PC-9 (cell line): ENCODE measurements at regions of chr3 and their contacts with region 1.

Region 1: DNA sequence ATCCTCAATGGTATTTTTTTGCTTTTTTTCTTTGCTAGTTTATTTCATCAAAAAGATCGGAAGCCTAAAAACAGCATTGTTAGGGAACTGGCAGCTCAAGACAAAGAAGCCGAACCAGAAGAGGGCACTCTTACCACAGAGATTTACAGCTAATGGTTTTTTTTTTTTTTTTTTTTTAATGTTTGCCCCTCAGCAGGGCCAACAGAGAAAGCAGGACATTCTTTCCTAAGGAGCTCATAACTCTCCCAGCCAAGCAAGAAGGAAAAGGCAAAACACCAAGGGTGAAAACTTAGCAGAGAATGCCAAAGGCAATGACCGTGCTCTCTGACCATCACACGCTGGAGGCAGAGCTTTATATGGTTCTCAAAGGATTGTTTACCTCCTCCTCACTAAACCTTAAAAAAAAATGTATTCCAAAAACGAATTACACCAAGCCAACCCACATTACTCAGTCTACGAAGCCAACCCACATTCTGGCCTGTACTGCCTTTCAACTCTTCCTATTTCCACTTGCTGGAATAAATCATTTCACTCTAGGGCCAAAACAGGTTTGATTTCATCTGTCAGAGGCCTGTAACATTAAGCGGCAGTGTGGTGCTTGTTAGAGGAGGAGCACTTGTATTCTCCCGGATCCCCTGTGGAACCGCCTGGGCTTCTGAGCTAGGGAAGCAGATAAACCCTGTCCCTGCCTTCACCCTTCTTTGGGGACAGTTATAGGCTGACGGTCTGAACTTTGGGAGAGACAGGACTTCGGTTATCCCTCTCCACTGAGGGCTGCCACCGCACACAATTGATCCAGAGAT is 35.6 kb upstream of the GYG1 start:
- DNase-seq: peak; percentile 50 to 80
- H3K4me3 ChIP-seq: no peak overlapping the region
- H3K27ac ChIP-seq: peak overlapping the region; percentile 28; the same call in 1 of the 2 replicates
- H3K4me1 ChIP-seq: peaks cover 7% of the 10 kb centered on the region; the same call in 1 of the 2 replicates
- H3K27me3 ChIP-seq: no peaks in the 10 kb centered on the region
- CTCF ChIP-seq: peak; percentile 72

Region 2: GRCh38 chr3:148896062-148896461 is 59.7 kb before region 1 on chr3:
- CTCF ChIA-PET with region 1: no interaction called
- POLR2A ChIA-PET with region 1: no interaction called
- intact Hi-C with region 1: no loop called
- DNase-seq: no peak
- H3K4me3 ChIP-seq: no peak overlapping the region
- H3K27ac ChIP-seq: no peak overlapping the region
- H3K4me1 ChIP-seq: no peaks in the 10 kb centered on the region
- H3K27me3 ChIP-seq: no peaks in the 10 kb centered on the region
- CTCF ChIP-seq: no peak

Region 3: DNA sequence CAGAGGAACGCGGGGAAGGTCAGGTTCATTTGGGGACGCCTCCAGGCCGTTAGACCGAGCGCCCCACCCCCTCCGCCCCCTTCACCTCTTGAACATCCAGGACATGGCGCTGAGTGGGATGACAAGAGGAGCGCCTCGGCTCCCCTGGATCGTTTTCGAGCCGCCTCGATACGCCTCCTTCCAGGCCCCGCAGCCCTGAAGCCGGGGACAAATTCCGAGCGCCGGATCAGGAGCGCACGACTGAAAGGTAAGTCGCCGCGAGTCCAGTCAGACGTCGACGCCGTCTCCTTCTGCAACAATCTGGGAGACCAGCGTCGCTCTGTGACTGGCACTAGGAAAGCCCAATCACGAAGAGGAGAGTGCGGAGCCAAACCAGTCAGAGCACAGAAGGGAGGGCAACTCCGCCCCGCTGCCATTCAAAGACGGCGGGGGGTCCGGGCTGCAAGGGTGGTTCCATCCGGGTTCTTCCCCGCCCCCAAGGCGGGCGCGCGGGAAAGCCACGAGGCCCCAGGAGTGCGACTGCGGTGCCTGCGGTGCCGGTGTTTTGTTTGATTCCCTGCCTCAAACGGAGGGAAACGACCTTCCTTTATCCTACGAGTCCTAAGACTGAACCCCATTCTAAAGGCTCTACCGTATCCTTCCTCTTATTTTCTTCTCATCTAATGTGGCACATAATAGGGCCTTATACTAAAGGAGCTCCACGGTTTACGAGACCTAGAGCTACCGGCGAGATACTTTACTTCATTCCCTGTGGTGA is 130.7 kb after region 1 on chr3 and contains the start of gene HLTF:
- CTCF ChIA-PET with region 1: interaction called, 12 read pairs
- POLR2A ChIA-PET with region 1: interaction called, 4 read pairs
- intact Hi-C with region 1: no loop called
- DNase-seq: peak; percentile 90 to 93
- H3K4me3 ChIP-seq: peak within 1 kb of the TSS; percentile 79
- H3K27ac ChIP-seq: no peak within 1 kb of the TSS
- H3K4me1 ChIP-seq: peaks cover 13% of the 10 kb centered on the region; the same call in 1 of the 2 replicates
- H3K27me3 ChIP-seq: no peaks in the 10 kb centered on the region
- CTCF ChIP-seq: no peak
- total RNA-seq, gene HLTF: 32.2 and 38.3 TPM in 2 replicates

Region 4: DNA sequence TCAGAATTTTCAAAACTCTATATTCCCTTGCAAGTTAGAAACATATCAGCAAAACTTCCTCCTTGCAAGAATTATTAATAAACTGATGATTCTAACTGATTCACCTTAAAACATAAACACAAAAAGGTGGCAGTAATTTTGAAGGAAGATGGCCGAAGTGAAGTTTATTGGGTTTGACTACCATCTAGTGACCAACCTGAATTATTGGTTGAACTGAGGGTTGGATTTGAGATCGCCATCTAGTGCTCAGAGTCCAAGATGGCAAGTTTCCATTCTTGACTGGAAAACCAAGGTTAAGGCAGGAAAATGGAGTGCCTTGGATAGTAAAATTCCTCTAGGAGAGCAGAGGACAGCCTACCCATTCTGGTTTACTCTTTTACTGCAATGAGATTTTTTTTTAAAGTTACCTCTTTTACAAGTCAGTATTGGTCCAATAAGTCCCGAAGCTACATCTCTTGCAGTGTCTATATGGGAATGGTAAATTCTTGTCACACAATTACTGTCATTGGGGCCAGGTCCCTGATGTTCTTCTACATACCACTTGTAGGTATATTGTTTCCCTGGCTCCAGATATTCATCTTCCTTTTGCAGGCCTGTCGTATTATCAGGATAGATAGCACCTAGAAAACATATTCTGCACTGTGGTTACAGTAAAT is 317.5 kb after region 1 on chr3:
- CTCF ChIA-PET with region 1: interaction called, 17 read pairs
- POLR2A ChIA-PET with region 1: no interaction called
- intact Hi-C with region 1: loop called (anchors 1 kb)
- DNase-seq: peak; percentile 48 to 71
- H3K4me3 ChIP-seq: no peak overlapping the region
- H3K27ac ChIP-seq: no peak overlapping the region
- H3K4me1 ChIP-seq: peaks cover 17% of the 10 kb centered on the region
- H3K27me3 ChIP-seq: no peaks in the 10 kb centered on the region
- CTCF ChIP-seq: peak; percentile 89

Region 5: GRCh38 chr3:149352556-149352955 is 396.8 kb after region 1 on chr3:
- CTCF ChIA-PET with region 1: no interaction called
- POLR2A ChIA-PET with region 1: interaction called, 8 read pairs
- intact Hi-C with region 1: loop called (anchors 5 kb)
- DNase-seq: peak; percentile 49 to 61
- H3K4me3 ChIP-seq: no peak overlapping the region
- H3K27ac ChIP-seq: no peak overlapping the region
- H3K4me1 ChIP-seq: no peaks in the 10 kb centered on the region
- H3K27me3 ChIP-seq: no peaks in the 10 kb centered on the region
- CTCF ChIP-seq: peak; percentile 82

Region 6: GRCh38 chr3:149487598-149488197 is 532.0 kb after region 1 on chr3:
- CTCF ChIA-PET with region 1: interaction called, 8 read pairs
- POLR2A ChIA-PET with region 1: no interaction called
- intact Hi-C with region 1: loop called (anchors 5 kb)
- DNase-seq: no peak
- H3K4me3 ChIP-seq: no peak overlapping the region
- H3K27ac ChIP-seq: no peak overlapping the region
- H3K4me1 ChIP-seq: no peaks in the 10 kb centered on the region
- H3K27me3 ChIP-seq: no peaks in the 10 kb centered on the region
- CTCF ChIP-seq: no peak; the same call in none of the 2 replicates

Region 7: GRCh38 chr3:149812606-149813366 is 857.0 kb after region 1 on chr3 and contains the start of gene RNF13:
- CTCF ChIA-PET with region 1: interaction called, 4 read pairs
- POLR2A ChIA-PET with region 1: interaction called, 18 read pairs
- intact Hi-C with region 1: no loop called
- DNase-seq: peak; percentile 82 to 93
- H3K4me3 ChIP-seq: peak within 1 kb of the TSS; percentile 84
- H3K27ac ChIP-seq: peak within 1 kb of the TSS; percentile 96
- H3K4me1 ChIP-seq: peaks cover 46% of the 10 kb centered on the region
- H3K27me3 ChIP-seq: no peaks in the 10 kb centered on the region
- CTCF ChIP-seq: no peak
- total RNA-seq, gene RNF13: 40.1 and 65.0 TPM in 2 replicates